ENCODE measurements at regions of chr12 and their contacts with region 1.

Region 1: GRCh38 chr12:111149299-111149698 is 219.6 kb downstream of the PHETA1 start:
- H3K4me3 Mint-ChIP-seq: no peak overlapping the region
- H3K27ac Mint-ChIP-seq: no peak overlapping the region
- H3K4me1 Mint-ChIP-seq: peaks cover 15% of the 10 kb centered on the region
- H3K27me3 Mint-ChIP-seq: peaks cover 4% of the 10 kb centered on the region

Region 2: DNA sequence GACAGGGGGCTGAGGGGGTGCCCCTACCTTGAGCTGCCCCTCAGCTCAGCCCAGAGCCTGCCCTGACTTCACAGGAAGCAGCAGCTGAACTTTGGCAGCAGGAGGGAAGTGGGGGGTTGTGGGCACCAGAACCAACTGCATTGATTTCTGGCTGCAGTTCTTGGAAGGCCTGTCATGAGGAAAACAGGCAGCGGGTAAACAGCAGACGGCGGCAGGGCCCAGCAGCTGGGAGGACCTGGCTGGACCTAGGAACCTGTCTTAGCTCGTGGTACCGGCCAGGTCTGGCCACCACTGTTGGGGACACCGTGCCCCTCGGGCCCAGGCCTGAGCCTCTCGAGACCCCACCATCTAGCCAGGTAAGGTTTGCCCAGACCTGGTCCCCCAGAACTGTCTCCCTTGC is 74.7 kb before region 1 on chr12:
- intact Hi-C with region 1: no loop called
- H3K4me3 Mint-ChIP-seq: no peak overlapping the region
- H3K27ac Mint-ChIP-seq: peak overlapping the region; percentile 8
- H3K4me1 Mint-ChIP-seq: peaks cover 5% of the 10 kb centered on the region
- H3K27me3 Mint-ChIP-seq: peaks cover 5% of the 10 kb centered on the region

Region 3: GRCh38 chr12:111274777-111275176 is 125.5 kb after region 1 on chr12:
- intact Hi-C with region 1: loop called (anchors 10 kb)
- H3K4me3 Mint-ChIP-seq: no peak overlapping the region
- H3K27ac Mint-ChIP-seq: no peak overlapping the region
- H3K4me1 Mint-ChIP-seq: peaks cover 9% of the 10 kb centered on the region
- H3K27me3 Mint-ChIP-seq: peaks cover 2% of the 10 kb centered on the region